Naive thymus-derived CD4-positive, alpha-beta T cell (primary cell): ENCODE measurements at regions of chr6 and their contacts with region 1.

Region 1: DNA sequence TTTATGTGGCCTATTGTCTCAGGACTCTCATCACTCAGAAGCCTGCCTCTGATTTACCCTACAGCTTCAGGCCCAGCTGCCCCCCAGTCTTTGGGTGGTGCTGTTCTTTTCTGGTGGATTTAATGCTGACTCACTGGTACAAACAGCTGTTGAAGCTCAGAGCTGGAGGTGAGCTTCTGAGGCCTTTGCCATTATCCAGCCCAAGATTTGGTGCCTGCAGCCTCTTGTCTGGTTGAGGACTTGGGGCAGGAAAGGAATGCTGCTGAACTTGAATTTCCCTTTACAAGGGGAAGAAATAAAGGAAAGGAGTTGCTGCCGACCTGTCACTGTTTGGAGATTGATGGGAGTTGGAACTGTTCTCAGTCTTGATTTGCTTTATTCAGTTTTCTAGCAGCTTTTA is 19.8 kb downstream of the ABCF1 start:
- DNase-seq: no peak
- ATAC-seq: no peak
- H3K4me3 ChIP-seq: no peak overlapping the region
- H3K4me3 Mint-ChIP-seq: no peak overlapping the region
- H3K27ac ChIP-seq: no peak overlapping the region
- H3K27ac Mint-ChIP-seq: peak overlapping the region in 2 of 9 donors; percentile 24 to 65
- H3K4me1 ChIP-seq: no peaks in the 10 kb centered on the region
- H3K4me1 Mint-ChIP-seq: peaks cover 2 to 17% (median 14%) of the 10 kb centered on the region in 7 donors
- H3K27me3 ChIP-seq: no peaks in the 10 kb centered on the region
- H3K27me3 Mint-ChIP-seq: no peaks in the 10 kb centered on the region

Region 2: GRCh38 chr6:30578051-30578450 is 12.9 kb before region 1 on chr6:
- CTCF ChIA-PET with region 1: interaction called, 8 read pairs
- POLR2A ChIA-PET with region 1: interaction called, 10 read pairs
- intact Hi-C with region 1: no loop called
- DNase-seq: no peak
- ATAC-seq: no peak
- H3K4me3 ChIP-seq: no peak overlapping the region
- H3K4me3 Mint-ChIP-seq: no peak overlapping the region
- H3K27ac ChIP-seq: no peak overlapping the region
- H3K27ac Mint-ChIP-seq: peak overlapping the region in 3 of 9 donors; percentile 25 to 47 (median 31)
- H3K4me1 ChIP-seq: peaks cover 7 to 17% of the 10 kb centered on the region in 2 donors
- H3K4me1 Mint-ChIP-seq: peaks cover 27 to 42% (median 34%) of the 10 kb centered on the region in 7 donors
- H3K27me3 ChIP-seq: no peaks in the 10 kb centered on the region
- H3K27me3 Mint-ChIP-seq: no peaks in the 10 kb centered on the region